ENCODE measurements at regions of chr15 and their contacts with region 1.

Region 1: GRCh38 chr15:48250640-48251076 is 44.6 kb downstream of the SLC12A1 start:
- DNase-seq: no peak
- H3K4me3 ChIP-seq: no peak overlapping the region
- H3K4me3 Mint-ChIP-seq: no peak overlapping the region
- H3K27ac ChIP-seq: no peak overlapping the region
- H3K27ac Mint-ChIP-seq: no peak overlapping the region
- H3K4me1 ChIP-seq: no peaks in the 10 kb centered on the region
- H3K4me1 Mint-ChIP-seq: no peaks in the 10 kb centered on the region
- H3K27me3 ChIP-seq: no peaks in the 10 kb centered on the region
- H3K27me3 Mint-ChIP-seq: peaks cover 4 to 10% (median 7%) of the 10 kb centered on the region in 3 donors
- CTCF ChIP-seq: peak; percentile 44

Region 2: GRCh38 chr15:46312133-46312740 is 1938.4 kb before region 1 on chr15:
- intact Hi-C with region 1: loop called in 1 of 2 experiments (anchors 10 kb)
- DNase-seq: peak; percentile 9 to 30 (median 26)
- H3K4me3 ChIP-seq: no peak overlapping the region
- H3K4me3 Mint-ChIP-seq: no peak overlapping the region
- H3K27ac ChIP-seq: no peak overlapping the region
- H3K27ac Mint-ChIP-seq: no peak overlapping the region
- H3K4me1 ChIP-seq: no peaks in the 10 kb centered on the region
- H3K4me1 Mint-ChIP-seq: no peaks in the 10 kb centered on the region
- H3K27me3 ChIP-seq: no peaks in the 10 kb centered on the region
- H3K27me3 Mint-ChIP-seq: peaks cover 0 to 4% (median 2%) of the 10 kb centered on the region in 3 donors
- CTCF ChIP-seq: peak; percentile 82

Region 3: GRCh38 chr15:48202068-48202467 is 48.6 kb before region 1 on chr15:
- intact Hi-C with region 1: no loop called
- DNase-seq: no peak
- H3K4me3 ChIP-seq: no peak overlapping the region
- H3K4me3 Mint-ChIP-seq: no peak overlapping the region
- H3K27ac ChIP-seq: no peak overlapping the region
- H3K27ac Mint-ChIP-seq: no peak overlapping the region
- H3K4me1 ChIP-seq: no peaks in the 10 kb centered on the region
- H3K4me1 Mint-ChIP-seq: no peaks in the 10 kb centered on the region
- H3K27me3 ChIP-seq: no peaks in the 10 kb centered on the region
- H3K27me3 Mint-ChIP-seq: peaks cover 3 to 6% (median 6%) of the 10 kb centered on the region in 3 donors
- CTCF ChIP-seq: no peak

Measured in CD14-positive monocyte (primary cell).